IMR-90 (cell line): ENCODE measurements at regions of chr4 and their contacts with region 1.

Region 1: DNA sequence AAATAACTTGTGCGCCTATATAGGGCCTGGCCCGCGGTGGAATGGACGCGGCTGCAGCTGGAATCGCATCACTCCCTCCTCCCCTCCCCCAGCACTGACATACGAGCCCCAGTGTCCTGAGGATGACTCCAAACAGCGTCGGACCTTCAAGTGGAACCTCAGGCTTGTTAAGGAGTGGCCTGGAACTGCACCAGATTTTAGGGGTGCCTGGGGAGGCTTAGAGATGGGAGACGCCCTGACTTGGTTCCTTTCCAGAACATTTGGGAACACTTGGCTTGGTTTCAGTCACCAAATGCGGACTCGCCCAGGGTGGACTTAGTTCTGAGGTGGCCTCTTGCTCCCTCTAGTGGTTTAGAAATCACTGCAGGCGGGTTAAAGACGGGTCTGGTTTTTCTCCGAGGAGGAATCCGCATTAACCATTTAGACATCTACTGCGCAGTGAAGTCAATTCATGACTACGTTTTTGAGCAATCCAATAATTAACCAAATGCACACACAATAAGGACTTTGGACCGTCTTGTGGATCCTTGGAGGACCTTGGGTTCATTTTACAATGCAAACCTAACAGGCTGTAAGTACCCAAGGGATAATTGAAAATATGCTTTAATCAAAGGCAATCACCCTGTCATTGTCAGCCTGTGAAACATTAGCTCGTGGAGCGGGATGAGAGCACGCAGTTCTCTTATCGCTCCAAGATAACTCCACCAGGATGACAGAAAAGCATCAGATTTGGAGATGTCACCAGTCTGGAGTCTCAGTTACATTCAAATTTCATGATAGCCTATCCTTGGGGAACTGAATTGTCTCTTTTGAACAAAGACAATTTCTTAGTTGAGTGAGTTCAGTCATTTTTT is 11.2 kb upstream of the PDGFRA start:
- DNase-seq: peak; percentile 83
- ATAC-seq: peak; percentile 94
- H3K4me3 ChIP-seq: peak overlapping the region; percentile 48
- H3K27ac ChIP-seq: peak overlapping the region; percentile 81
- H3K4me1 ChIP-seq: peaks cover 3% of the 10 kb centered on the region
- H3K27me3 ChIP-seq: no peaks in the 10 kb centered on the region
- CTCF ChIP-seq: peak; percentile 91
- POLR2A ChIP-seq: 0 out of 2 replicates have a peak, but pooled peaks have one; percentile 27
- RAD21 ChIP-seq: peak; percentile 92

Region 2: DNA sequence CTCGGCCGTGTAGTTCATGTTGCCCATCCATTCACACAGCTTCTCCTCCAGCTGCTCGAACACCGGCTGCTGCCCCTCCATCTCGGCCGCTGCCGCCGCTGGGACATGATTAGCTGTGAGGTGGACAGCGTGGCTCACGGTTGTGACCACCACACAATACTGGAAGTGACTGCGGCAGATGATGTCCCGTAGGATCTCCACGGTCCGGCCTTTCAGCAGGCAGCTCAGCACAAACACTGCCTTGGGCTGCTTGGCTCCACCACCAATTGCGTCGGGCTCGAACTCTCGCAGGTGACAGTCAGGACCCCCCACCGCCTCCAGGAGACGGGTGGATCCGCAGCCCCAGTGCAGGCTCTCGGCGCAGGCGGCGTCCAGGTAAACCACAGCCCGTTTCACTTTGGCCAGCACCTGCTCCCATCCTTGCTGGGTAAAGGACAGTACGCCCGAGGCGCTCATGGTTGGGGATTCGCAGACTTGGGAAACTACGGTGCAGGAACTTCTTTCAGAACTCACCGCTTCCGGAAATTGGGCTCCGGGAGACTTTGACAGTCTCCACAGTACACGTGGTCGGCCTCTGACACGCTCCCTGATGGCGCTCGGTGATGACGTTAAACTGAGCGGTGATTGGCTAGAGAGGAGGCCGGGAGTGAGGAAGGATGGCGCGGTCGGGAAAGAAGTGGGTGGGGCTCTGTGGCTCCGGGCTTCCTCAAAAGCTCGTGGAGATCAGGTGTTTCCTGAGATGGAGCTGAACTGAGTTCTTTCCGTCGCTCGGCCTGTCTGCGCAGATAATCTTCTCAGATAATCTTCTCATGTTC is 852.2 kb before region 1 on chr4 and contains the start of gene SCFD2:
- CTCF ChIA-PET with region 1: no interaction called
- POLR2A ChIA-PET with region 1: interaction called, 10 read pairs
- dilution Hi-C with region 1: no loop called
- in situ Hi-C with region 1: no loop called
- intact Hi-C with region 1: no loop called
- DNase-seq: peak; percentile 97
- ATAC-seq: peak; percentile 97
- H3K4me3 ChIP-seq: peak within 1 kb of the TSS; percentile 79
- H3K27ac ChIP-seq: peak within 1 kb of the TSS; percentile 57
- H3K4me1 ChIP-seq: 0 out of 2 replicates have a peak, but pooled peaks cover 3% of the 10 kb centered on the region
- H3K27me3 ChIP-seq: no peaks in the 10 kb centered on the region
- CTCF ChIP-seq: no peak
- POLR2A ChIP-seq: peak; percentile 36; the same call in 1 of the 2 replicates
- RAD21 ChIP-seq: no peak
- total RNA-seq, gene SCFD2: 51.9 and 62.4 TPM in 2 replicates

Region 3: GRCh38 chr4:53929955-53930798 is 287.7 kb before region 1 on chr4:
- CTCF ChIA-PET with region 1: interaction called, 4 read pairs
- POLR2A ChIA-PET with region 1: no interaction called
- dilution Hi-C with region 1: no loop called
- in situ Hi-C with region 1: no loop called
- intact Hi-C with region 1: loop called (anchors 1 kb)
- DNase-seq: peak; percentile 93
- ATAC-seq: peak; percentile 75
- H3K4me3 ChIP-seq: no peak overlapping the region
- H3K27ac ChIP-seq: peak overlapping the region; percentile 20; the same call in 1 of the 2 replicates
- H3K4me1 ChIP-seq: peaks cover 14% of the 10 kb centered on the region
- H3K27me3 ChIP-seq: no peaks in the 10 kb centered on the region
- CTCF ChIP-seq: peak; percentile 85
- POLR2A ChIP-seq: no peak
- RAD21 ChIP-seq: peak; percentile 84

Region 4: GRCh38 chr4:54005475-54005874 is 212.4 kb before region 1 on chr4:
- CTCF ChIA-PET with region 1: no interaction called
- POLR2A ChIA-PET with region 1: interaction called, 3 read pairs
- dilution Hi-C with region 1: no loop called
- in situ Hi-C with region 1: no loop called
- intact Hi-C with region 1: loop called (anchors 5 kb)
- DNase-seq: peak; percentile 58
- ATAC-seq: peak; percentile 69
- H3K4me3 ChIP-seq: no peak overlapping the region; the same call in 1 of the 2 replicates
- H3K27ac ChIP-seq: no peak overlapping the region
- H3K4me1 ChIP-seq: peaks cover 2% of the 10 kb centered on the region; the same call in 1 of the 2 replicates
- H3K27me3 ChIP-seq: no peaks in the 10 kb centered on the region
- CTCF ChIP-seq: no peak
- POLR2A ChIP-seq: no peak
- RAD21 ChIP-seq: no peak

Region 5: GRCh38 chr4:54064295-54065111 is 153.4 kb before region 1 on chr4 and contains the start of gene CHIC2:
- CTCF ChIA-PET with region 1: no interaction called
- POLR2A ChIA-PET with region 1: no interaction called
- dilution Hi-C with region 1: no loop called
- in situ Hi-C with region 1: loop called (anchors 10 kb)
- intact Hi-C with region 1: loop called (anchors 1 kb)
- DNase-seq: peak; percentile 92
- ATAC-seq: peak; percentile 88
- H3K4me3 ChIP-seq: peak within 1 kb of the TSS; percentile 81
- H3K27ac ChIP-seq: peak within 1 kb of the TSS; percentile 97
- H3K4me1 ChIP-seq: peaks cover 13% of the 10 kb centered on the region; the same call in 1 of the 2 replicates
- H3K27me3 ChIP-seq: no peaks in the 10 kb centered on the region
- CTCF ChIP-seq: no peak
- POLR2A ChIP-seq: peak; percentile 96
- RAD21 ChIP-seq: no peak
- total RNA-seq, gene CHIC2: 26.3 and 65.0 TPM in 2 replicates